Activated naive CD4-positive, alpha-beta T cell treated with anti-CD3 and anti-CD28 coated beads for 36 hours (primary cell): ENCODE measurements at regions of chr11 and their contacts with region 1.

Region 1: GRCh38 chr11:10455637-10456487 is 798 bp downstream of the AMPD3 start:
- DNase-seq: peak; percentile 87
- H3K4me3 Mint-ChIP-seq: peak overlapping the region; percentile 82
- H3K27ac Mint-ChIP-seq: peak overlapping the region; percentile 93
- H3K4me1 Mint-ChIP-seq: peaks cover 85% of the 10 kb centered on the region
- H3K27me3 Mint-ChIP-seq: no peaks in the 10 kb centered on the region

Region 2: DNA sequence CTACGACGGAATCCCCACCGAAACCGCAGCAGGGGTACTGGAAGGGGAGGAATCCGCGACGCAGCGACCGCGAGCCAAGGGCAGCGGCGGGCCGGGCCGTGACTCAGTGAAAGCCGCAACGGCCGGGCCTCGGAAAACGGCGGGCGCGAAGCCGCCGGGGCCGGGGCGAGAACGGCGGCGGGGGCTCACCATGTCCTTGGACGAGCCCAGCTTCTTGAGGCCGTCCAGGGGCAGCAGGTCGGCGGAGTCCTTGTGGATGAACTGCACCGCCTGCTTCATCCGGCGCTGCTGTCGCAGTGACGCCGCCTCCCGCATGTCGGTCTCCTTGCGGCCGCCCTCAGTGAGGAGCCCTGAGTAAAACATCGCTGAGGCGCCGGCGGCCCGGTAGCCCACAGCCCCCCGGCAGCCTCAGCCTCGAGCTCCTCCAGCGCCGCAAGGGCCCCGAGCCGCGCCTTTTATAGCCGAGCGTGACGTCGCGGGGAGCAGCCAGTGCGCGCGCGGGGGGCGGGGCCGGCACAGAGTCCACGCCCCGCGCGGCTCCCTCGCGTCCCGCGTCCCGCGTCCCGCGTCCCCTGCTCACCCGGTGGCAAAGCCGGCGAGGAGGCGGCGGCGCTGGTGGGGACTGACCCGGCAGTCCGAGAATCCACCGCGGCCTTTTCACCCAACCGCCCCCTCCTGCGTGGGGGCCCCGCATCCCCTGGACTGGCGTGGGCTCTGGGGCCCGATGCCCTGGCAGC is 1452.1 kb before region 1 on chr11 and contains the start of gene NRIP3:
- CTCF ChIA-PET with region 1: no interaction called
- intact Hi-C with region 1: loop called (anchors 10 kb)
- DNase-seq: peak; percentile 67
- H3K4me3 Mint-ChIP-seq: peak within 1 kb of the TSS; percentile 68
- H3K27ac Mint-ChIP-seq: no peak within 1 kb of the TSS
- H3K4me1 Mint-ChIP-seq: peaks cover 24% of the 10 kb centered on the region
- H3K27me3 Mint-ChIP-seq: peaks cover 33% of the 10 kb centered on the region
- total RNA-seq, gene NRIP3: 3.0 to 3.5 TPM

Region 3: GRCh38 chr11:10413268-10413667 is 42.6 kb before region 1 on chr11:
- CTCF ChIA-PET with region 1: interaction called, 15 read pairs
- intact Hi-C with region 1: loop called (anchors 1 kb)
- DNase-seq: peak; percentile 71
- H3K4me3 Mint-ChIP-seq: no peak overlapping the region
- H3K27ac Mint-ChIP-seq: no peak overlapping the region
- H3K4me1 Mint-ChIP-seq: peaks cover 26% of the 10 kb centered on the region
- H3K27me3 Mint-ChIP-seq: no peaks in the 10 kb centered on the region

Region 4: GRCh38 chr11:10488581-10489443 is 33.0 kb after region 1 on chr11:
- CTCF ChIA-PET with region 1: interaction called, 4 read pairs
- intact Hi-C with region 1: loop called (anchors 2 kb)
- DNase-seq: peak; percentile 12
- H3K4me3 Mint-ChIP-seq: no peak overlapping the region
- H3K27ac Mint-ChIP-seq: peak overlapping the region; percentile 64
- H3K4me1 Mint-ChIP-seq: peaks cover 18% of the 10 kb centered on the region
- H3K27me3 Mint-ChIP-seq: no peaks in the 10 kb centered on the region

Region 5: GRCh38 chr11:10540923-10541560 is 85.2 kb after region 1 on chr11 and contains the start of gene RNF141:
- CTCF ChIA-PET with region 1: interaction called, 15 read pairs
- intact Hi-C with region 1: loop called (anchors 1 kb)
- DNase-seq: peak; percentile 96
- H3K4me3 Mint-ChIP-seq: peak within 1 kb of the TSS; percentile 86
- H3K27ac Mint-ChIP-seq: no peak within 1 kb of the TSS
- H3K4me1 Mint-ChIP-seq: peaks cover 21% of the 10 kb centered on the region
- H3K27me3 Mint-ChIP-seq: no peaks in the 10 kb centered on the region
- total RNA-seq, gene RNF141: 20.9 to 21.8 TPM

Region 6: DNA sequence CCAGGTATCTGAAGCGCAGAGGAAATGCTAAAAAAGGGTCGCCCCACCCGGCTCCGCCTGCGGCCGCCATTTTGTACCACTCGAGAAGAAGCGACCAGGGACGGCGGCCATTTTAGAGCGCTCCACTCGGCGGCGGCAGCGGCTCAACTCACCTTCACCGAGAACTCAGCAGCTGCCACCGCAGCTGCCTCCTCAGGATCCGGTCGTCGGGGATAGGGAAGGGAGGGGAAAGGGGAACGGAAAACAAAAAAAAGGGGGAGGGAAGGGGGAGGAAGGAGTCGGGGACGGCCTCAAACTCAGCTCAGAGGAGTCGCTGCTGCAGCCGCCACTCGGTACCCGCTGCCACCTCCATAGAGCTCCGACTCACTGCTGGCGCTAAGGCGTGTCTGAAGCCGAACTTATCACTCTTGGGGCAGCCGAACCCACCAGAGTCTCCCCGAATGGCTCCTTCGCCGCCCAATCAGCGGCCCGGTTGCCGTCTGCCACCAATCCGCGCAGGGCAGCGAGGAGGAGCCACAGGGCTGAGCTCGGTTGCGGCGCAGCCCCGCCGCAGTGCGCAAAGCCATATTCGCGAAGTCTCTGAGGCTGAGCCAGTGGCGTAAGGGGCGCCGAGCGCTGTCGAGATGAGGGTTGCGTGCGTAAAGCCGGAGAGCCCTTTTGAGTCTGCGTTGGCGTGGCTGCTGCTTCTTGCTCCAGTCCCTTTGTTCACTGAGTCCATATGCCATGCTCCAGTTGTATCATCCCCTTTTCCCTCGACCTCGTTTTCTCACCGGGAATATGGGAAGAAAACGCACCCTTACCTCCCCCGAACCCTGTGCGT is 352.9 kb after region 1 on chr11 and contains the start of gene EIF4G2:
- CTCF ChIA-PET with region 1: no interaction called
- intact Hi-C with region 1: loop called (anchors 1 kb)
- DNase-seq: peak; percentile 98
- H3K4me3 Mint-ChIP-seq: peak within 1 kb of the TSS; percentile 95
- H3K27ac Mint-ChIP-seq: peak within 1 kb of the TSS; percentile 97
- H3K4me1 Mint-ChIP-seq: peaks cover 43% of the 10 kb centered on the region
- H3K27me3 Mint-ChIP-seq: no peaks in the 10 kb centered on the region
- total RNA-seq, gene EIF4G2: 640 to 734 TPM